Activated naive CD4-positive, alpha-beta T cell treated with anti-CD3 and anti-CD28 coated beads, Interleukin-2, amount 10 ng/mL, durations not matched to agents 7 days and 5 days (primary cell): ENCODE measurements at regions of chr12 and their contacts with region 1.

Region 1: DNA sequence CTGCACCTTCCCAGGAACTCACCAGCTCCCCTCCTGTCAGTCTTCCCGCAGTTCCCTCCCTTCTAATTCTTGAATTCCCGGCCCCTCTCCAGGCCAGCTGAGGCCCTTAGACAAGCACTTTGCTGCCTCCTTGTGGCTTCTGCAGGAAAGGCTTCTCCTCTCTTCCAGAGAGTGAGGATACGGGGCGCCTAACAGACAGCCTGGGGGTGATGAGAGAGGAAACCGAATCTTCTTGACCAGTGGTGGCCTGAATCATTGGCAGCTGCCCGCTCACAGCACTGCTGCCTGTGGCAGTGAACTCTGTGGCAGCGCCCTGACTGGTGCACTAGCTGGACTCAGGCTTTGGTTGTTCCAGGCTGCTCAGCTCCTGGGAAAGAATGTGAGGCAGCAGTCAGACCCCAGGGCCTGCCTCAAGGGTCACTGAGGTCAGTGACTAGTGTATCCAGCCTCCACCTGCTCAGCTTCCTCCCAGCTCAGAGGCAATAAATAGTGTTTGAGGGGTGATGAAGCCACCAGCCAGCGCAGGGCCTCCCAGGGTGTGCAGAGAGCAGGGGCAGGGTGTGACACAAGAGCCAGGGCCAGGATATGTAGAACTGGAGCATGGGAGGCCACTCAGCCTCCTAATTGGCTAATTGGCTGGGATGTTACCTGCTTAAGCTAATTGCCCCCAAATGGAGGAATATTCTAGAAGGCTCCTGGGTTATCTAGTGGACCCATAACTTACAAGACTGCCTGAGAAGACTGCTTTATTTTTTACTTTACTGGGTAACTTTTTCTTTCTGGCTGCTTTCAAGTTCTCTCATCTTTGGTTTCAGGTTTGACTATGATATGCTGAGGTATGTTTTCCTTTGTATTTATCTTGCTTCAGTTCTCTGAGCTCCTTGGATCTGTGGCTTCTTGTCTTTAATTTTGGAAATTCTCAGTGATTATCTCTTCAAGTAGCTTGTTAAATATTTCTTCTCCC is 12.9 kb upstream of the MCRS1 start:
- DNase-seq: peak; percentile 78
- H3K4me3 Mint-ChIP-seq: no peak overlapping the region
- H3K27ac Mint-ChIP-seq: no peak overlapping the region
- H3K4me1 Mint-ChIP-seq: peaks cover 15% of the 10 kb centered on the region
- H3K27me3 Mint-ChIP-seq: no peaks in the 10 kb centered on the region

Region 2: DNA sequence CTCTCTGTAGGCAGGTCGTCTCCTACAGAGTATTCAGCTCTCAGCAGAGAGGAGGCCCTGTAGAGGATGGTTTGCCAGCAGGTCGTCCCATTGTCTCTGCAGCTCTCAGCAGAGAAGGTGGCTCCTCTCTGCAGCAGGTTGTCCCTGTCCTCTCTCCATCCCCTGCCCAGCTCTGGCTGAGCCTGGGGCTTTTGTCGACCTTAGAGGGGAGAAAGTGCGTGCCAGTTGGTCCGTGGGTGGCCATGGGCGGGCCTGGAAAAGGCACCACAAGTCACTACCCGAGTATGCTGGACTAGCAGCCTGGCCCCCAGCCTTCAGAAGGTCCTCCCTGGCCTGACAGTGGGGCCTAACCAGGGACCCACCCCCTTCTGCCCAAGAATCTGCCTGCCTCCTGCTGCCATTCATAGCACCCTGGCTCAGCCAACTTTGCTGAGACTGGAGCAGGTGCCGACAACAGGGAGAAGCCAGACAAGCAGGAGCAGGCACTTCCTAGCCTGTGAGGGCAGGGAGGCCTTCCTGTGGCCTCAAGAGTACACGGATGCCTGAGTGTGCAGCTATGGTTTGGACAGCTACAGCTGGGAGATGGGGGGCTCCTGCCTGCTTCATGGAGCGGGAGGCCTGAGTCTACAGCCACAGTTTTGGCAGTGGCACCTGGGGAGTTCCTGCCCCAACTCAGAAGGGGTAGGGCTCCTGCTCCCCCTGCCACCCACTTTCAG is 101.7 kb before region 1 on chr12:
- CTCF ChIA-PET with region 1: no interaction called
- DNase-seq: no peak
- H3K4me3 Mint-ChIP-seq: no peak overlapping the region
- H3K27ac Mint-ChIP-seq: no peak overlapping the region
- H3K4me1 Mint-ChIP-seq: peaks cover 10% of the 10 kb centered on the region
- H3K27me3 Mint-ChIP-seq: no peaks in the 10 kb centered on the region

Region 3: GRCh38 chr12:49567611-49568441 is 13.0 kb before region 1 on chr12 and contains the start of gene MCRS1:
- CTCF ChIA-PET with region 1: interaction called, 18 read pairs
- DNase-seq: peak; percentile 93
- H3K4me3 Mint-ChIP-seq: peak within 1 kb of the TSS; percentile 96
- H3K27ac Mint-ChIP-seq: peak within 1 kb of the TSS; percentile 96
- H3K4me1 Mint-ChIP-seq: peaks cover 62% of the 10 kb centered on the region
- H3K27me3 Mint-ChIP-seq: no peaks in the 10 kb centered on the region